ENCODE measurements at regions of chr1 and their contacts with region 1.

Region 1: GRCh38 chr1:18902523-18903290 is at the start of gene ALDH4A1:
- DNase-seq: peak; percentile 99
- H3K4me3 ChIP-seq: peak within 1 kb of the TSS; percentile 87
- H3K27ac ChIP-seq: peak within 1 kb of the TSS; percentile 68
- H3K4me1 ChIP-seq: peaks cover 7% of the 10 kb centered on the region
- H3K27me3 ChIP-seq: no peaks in the 10 kb centered on the region
- CTCF ChIP-seq: no peak
- total RNA-seq, gene ALDH4A1: 7.9 to 13.0 TPM

Region 2: DNA sequence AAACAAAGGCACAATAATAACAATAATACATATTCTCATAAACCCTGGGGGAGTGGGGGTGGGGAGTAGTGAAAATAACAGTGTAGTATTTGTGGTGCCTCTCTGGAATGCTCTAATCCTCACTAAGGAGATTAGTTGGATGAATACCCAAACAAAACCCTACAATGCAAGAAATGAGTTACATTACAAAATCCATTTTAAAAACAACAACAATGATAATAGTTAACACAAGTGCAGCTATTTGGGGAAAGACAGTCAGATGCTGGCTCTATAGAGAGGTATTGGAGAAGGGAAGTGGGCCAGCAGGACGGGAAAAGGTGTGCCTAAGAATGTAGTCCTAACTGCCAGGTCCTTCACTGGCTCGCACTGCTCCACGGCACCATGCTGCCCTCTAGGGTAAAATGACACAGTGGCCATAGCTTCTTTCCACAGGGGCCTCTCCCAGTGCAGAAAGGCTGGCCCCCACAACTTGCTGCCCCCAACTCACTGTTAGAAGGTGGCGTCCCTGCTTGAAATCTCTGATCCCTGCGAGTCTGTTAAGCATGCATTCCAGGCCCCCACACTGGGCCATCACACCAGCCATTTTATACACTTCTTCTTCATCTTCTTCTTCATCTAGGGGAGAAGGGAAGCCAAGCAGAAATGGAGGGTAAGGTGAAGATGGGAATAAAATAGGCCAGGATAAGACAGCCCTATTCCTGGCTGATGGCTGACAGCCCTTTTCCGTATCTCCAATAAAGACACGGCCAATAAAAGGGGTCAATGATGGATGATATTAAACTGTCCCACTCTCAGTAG is 193.5 kb after region 1 on chr1:
- intact Hi-C with region 1: loop called (anchors 5 kb)
- DNase-seq: peak; percentile 64
- H3K4me3 ChIP-seq: no peak overlapping the region
- H3K27ac ChIP-seq: no peak overlapping the region
- H3K4me1 ChIP-seq: no peaks in the 10 kb centered on the region
- H3K27me3 ChIP-seq: no peaks in the 10 kb centered on the region
- CTCF ChIP-seq: peak; percentile 36

Region 3: DNA sequence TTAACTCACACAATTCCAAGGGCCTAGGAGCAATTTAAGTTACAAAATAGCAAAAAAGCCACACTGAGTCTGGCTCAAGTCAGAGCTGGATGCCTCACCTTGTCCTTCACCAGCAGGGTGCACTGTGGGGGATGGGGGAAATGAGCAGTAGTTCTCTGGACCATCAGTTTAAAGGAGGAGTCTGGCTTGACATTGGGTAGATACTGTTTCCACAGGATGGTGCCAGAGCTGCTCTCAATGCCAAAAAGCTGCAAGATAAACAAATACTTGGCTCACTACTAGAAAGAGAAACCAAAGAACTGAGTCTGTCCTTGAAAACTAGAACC is 329.8 kb after region 1 on chr1:
- intact Hi-C with region 1: loop called (anchors 10 kb)
- DNase-seq: peak; percentile 34
- H3K4me3 ChIP-seq: no peak overlapping the region
- H3K27ac ChIP-seq: peak overlapping the region; percentile 12
- H3K4me1 ChIP-seq: peaks cover 4% of the 10 kb centered on the region
- H3K27me3 ChIP-seq: no peaks in the 10 kb centered on the region
- CTCF ChIP-seq: no peak

Measured in colonic mucosa (tissue), 4 donors.